Activated CD4-positive, alpha-beta T cell treated with anti-CD3 and anti-CD28 coated beads, Interleukin-2, amount 10 ng/mL, durations not matched to agents 24 days and 14 days (primary cell): ENCODE measurements at regions of chr22 and their contacts with region 1.

Region 1: DNA sequence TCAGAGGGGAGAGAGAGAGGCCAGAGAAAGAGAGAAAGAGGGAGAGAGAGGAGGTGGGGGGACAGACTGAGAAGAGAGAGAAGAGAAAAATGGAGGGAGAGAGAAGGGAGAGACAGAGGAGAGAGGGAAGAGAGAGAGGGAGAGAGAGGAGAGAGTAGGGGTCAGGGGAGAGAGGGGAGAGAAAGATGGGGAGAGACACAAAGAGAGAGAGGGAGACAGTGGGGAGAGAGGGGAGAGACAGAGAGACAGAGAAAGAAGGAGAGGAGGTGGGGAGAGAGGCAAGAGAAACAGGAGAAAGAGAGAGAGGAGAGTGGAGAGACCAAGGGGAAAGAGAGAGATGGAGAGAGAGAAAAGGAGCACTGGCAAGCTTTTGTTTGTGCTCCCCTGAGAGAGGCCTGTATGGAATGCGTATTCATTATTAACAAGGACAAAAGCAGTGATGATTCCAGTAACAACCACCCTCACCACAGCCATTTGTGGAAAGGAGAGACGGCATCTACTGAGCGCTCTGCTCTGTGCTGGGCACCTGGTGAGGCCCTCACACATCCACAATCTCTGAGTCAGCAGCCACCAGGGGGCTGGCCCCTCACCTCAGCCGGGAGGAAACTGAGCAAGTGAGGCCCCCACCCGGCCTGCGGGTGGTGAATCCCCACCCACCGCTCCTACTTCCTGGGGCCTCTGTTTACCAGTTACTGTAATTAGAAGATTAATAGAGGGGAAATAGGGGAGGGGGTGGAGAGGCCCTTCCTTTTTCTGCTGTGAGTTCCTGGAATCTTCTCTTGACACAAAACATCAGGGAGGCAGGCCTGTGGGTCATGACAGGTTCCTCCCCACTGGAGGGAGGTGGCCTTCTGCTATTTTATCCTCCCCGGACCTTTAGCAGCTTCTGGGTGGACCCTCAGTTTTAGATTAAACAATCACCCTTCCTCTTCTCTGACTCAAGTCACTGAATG is 14.6 kb upstream of the MIAT start:
- DNase-seq: peak; percentile 92
- H3K4me3 Mint-ChIP-seq: peak overlapping the region; percentile 74
- H3K27ac Mint-ChIP-seq: peak overlapping the region; percentile 96
- H3K4me1 Mint-ChIP-seq: peaks cover 75% of the 10 kb centered on the region
- H3K27me3 Mint-ChIP-seq: no peaks in the 10 kb centered on the region

Region 2: DNA sequence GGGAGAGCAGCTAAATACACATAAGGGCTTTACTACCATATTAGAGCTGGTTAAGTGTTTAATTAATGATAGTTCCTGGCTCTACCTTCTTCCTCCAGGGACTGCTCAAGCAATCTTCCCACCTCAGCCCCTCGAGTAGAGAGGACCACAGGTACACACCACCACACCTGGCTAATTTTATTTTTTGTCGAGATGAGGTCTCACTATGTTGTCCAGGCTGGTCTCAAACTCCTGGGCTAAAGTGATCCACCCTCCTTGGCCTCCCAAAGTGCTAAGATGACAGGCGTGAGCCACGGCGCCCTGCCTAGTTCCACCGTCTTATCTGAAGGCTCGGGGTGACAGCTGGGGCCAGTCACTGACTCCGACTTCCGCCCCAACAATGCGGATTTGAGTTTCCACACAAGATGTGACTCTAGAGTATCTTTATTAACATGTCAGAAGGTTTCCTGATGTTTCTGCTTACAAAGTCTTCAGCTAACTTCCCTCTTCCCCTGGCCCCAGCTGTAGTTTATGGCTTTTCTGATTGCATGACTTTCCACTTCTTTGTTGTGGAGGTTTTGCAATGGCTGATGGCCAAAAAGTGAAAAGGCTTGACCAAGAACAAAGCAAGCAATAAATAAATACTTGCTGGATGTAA is 69.6 kb before region 1 on chr22:
- intact Hi-C with region 1: no loop called
- DNase-seq: no peak
- H3K4me3 Mint-ChIP-seq: peak overlapping the region; percentile 26
- H3K27ac Mint-ChIP-seq: peak overlapping the region; percentile 17
- H3K4me1 Mint-ChIP-seq: peaks cover 49% of the 10 kb centered on the region
- H3K27me3 Mint-ChIP-seq: no peaks in the 10 kb centered on the region

Region 3: GRCh38 chr22:26610072-26610958 is 32.4 kb before region 1 on chr22:
- intact Hi-C with region 1: loop called (anchors 1 kb)
- DNase-seq: peak; percentile 86
- H3K4me3 Mint-ChIP-seq: peak overlapping the region; percentile 33
- H3K27ac Mint-ChIP-seq: peak overlapping the region; percentile 80
- H3K4me1 Mint-ChIP-seq: peaks cover 30% of the 10 kb centered on the region
- H3K27me3 Mint-ChIP-seq: peaks cover 20% of the 10 kb centered on the region